ENCODE measurements at regions of chr21 and their contacts with region 1.

Region 1: GRCh38 chr21:38170280-38170679 is 86.5 kb upstream of the KCNJ15 start:
- DNase-seq: peak; percentile 66
- H3K4me3 ChIP-seq: no peak overlapping the region
- H3K27ac ChIP-seq: peak overlapping the region; percentile 84
- H3K4me1 ChIP-seq: peaks cover 36% of the 10 kb centered on the region
- H3K27me3 ChIP-seq: no peaks in the 10 kb centered on the region
- CTCF ChIP-seq: peak; percentile 67 to 68
- POLR2A ChIP-seq: no peak

Region 2: DNA sequence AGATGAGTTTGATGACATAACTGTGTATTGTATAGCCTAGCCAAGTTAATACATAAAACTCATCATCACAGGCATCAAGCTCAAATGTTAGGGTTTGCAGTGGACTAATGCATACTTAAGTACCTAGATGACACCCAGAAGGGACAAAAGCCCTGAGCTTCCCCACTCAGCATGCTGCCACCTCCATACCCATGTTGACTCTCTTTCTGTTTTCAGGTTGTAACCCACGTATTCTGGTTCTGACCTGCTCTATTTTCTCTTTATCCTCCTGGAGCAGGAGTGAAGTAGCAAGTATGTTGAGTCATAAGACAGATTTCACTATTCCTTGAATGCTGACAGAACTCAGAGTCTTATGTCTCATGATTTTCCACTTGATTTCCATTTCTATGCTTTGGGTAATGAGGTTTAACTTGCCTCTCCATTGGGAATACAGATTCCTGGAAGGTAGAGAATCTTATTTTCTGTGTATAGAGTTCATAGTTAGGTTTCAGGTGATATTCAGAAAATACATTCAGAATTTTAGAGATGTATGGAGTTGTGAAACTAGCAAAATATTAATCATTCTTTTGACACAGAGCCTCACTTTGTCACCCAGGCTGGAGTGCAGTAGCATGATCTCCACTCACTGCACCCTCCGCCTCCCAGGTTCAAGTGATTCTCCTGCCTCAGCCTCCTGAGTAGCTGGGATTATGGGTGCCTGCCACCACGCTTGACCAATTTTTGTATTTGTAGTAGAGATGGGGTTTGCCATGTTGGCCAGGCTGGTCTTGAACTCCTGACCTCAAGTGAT is 36.0 kb before region 1 on chr21:
- CTCF ChIA-PET with region 1: no interaction called
- POLR2A ChIA-PET with region 1: no interaction called
- dilution Hi-C with region 1: no loop called
- intact Hi-C with region 1: no loop called
- DNase-seq: no peak
- H3K4me3 ChIP-seq: no peak overlapping the region
- H3K27ac ChIP-seq: no peak overlapping the region
- H3K4me1 ChIP-seq: no peaks in the 10 kb centered on the region
- H3K27me3 ChIP-seq: peaks cover 7 to 10% of the 10 kb centered on the region in 2 experiments
- CTCF ChIP-seq: no peak
- POLR2A ChIP-seq: no peak

Region 3: DNA sequence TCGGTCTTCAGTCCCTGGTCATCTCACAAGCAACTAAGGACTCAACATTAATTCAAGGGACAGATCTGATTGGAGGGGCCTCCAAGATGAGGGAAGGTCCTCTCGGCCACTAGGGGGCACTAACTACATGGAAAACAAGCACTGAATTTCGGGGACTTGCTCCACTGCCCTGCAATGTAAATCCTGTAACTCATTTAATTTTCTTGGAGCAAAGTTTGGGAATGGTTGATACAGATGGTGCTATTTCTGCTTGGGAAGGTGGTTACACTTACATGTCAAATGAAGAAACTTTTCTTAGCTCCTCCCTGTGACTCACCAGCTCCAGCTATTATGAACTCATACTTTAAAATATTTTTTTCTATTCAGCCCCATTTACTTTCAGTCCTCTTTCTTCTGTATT is 10.9 kb before region 1 on chr21:
- CTCF ChIA-PET with region 1: interaction called, 71 read pairs
- POLR2A ChIA-PET with region 1: no interaction called
- dilution Hi-C with region 1: no loop called
- intact Hi-C with region 1: loop called (anchors 1 kb)
- DNase-seq: peak; percentile 81
- H3K4me3 ChIP-seq: no peak overlapping the region
- H3K27ac ChIP-seq: no peak overlapping the region
- H3K4me1 ChIP-seq: no peaks in the 10 kb centered on the region
- H3K27me3 ChIP-seq: peaks cover 20 to 29% of the 10 kb centered on the region in 2 experiments
- CTCF ChIP-seq: peak; percentile 84 to 93
- POLR2A ChIP-seq: no peak

Region 4: GRCh38 chr21:38196036-38196435 is 25.8 kb after region 1 on chr21:
- CTCF ChIA-PET with region 1: interaction called, 3 read pairs
- POLR2A ChIA-PET with region 1: no interaction called
- dilution Hi-C with region 1: no loop called
- intact Hi-C with region 1: loop called (anchors 2 kb)
- DNase-seq: peak; percentile 35
- H3K4me3 ChIP-seq: no peak overlapping the region
- H3K27ac ChIP-seq: no peak overlapping the region
- H3K4me1 ChIP-seq: peaks cover 4% of the 10 kb centered on the region
- H3K27me3 ChIP-seq: no peaks in the 10 kb centered on the region
- CTCF ChIP-seq: no peak
- POLR2A ChIP-seq: no peak

Region 5: DNA sequence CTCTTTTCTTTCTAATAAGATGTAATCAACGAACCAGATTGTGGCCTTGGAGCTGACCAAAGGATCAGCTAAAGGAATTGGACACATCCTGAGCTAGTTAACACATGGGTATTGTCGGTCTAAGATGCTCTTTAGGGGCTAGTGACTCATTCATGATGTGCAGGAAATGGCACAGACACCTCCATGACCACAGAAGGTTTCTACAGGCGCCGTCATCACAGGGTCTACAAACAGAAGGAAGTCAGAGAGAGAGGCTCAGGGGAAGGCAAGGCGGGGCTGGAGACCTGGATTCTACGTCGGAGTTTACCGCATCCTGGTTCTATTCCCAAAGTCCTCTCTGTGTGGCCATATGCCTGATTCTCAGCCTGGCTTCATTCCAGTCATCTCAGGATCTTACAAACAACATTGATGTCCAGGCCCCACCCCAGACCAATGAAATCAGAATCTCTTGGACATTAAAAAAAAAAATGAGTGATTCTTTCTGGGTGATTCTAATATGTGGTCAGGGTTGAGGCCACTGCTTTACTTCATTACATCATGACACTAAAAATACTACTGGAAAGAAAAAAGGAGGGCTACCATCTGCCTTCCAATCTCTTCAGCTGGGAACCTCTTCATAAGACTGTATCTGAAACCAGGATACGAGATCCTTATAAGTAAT is 74.7 kb after region 1 on chr21:
- CTCF ChIA-PET with region 1: interaction called, 7 read pairs
- POLR2A ChIA-PET with region 1: no interaction called
- dilution Hi-C with region 1: no loop called
- intact Hi-C with region 1: loop called (anchors 2 kb)
- DNase-seq: peak; percentile 33
- H3K4me3 ChIP-seq: no peak overlapping the region
- H3K27ac ChIP-seq: peak overlapping the region; percentile 7
- H3K4me1 ChIP-seq: peaks cover 22% of the 10 kb centered on the region
- H3K27me3 ChIP-seq: peaks cover 2 to 12% of the 10 kb centered on the region in 2 experiments
- CTCF ChIP-seq: no peak
- POLR2A ChIP-seq: no peak

Region 6: DNA sequence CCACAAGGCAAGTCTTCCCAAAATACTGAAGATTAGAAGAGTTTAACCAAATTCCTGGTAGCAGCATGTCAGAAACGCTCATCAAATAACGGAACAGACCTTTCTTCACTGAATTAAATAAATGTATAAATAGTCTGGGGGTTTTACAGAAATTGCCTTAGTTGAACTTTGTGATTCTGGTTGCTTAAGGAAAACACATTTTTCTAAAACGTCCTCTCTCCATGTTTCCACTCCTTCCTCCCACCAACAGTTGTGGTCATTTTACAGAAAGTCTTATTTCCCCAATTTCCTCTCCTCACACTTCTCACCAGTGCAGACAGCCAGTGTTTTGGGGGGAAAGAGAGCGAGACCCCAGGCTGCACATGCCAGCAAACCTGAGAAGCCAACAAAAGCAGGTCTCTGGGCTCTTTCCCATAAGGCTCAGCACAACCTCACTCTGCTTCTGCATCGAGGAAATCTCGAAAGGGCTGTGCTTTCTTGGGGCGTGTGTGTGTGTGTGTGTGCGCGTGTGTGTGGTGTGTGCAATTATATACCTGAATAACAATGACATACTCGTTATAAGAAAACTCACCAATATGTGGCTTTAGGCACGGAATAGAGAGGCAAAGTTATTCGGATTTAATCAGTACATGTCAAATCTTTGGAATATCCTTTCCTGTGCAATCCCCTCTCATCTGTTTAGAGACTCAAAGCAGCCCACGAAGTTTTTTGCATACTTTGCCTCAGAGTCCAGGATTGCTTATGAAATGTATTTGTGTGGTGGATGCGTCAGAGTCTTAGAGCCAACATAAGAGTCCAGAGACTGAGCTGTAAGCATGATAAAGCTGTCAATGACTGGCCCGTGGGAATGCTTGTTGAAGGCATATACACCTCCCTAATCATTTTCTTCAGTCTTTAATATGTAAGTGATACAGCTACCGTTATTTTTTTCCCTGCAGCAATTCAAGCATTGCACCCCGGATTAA is 88.5 kb after region 1 on chr21:
- CTCF ChIA-PET with region 1: no interaction called
- POLR2A ChIA-PET with region 1: no interaction called
- dilution Hi-C with region 1: no loop called
- intact Hi-C with region 1: no loop called
- DNase-seq: no peak
- H3K4me3 ChIP-seq: no peak overlapping the region
- H3K27ac ChIP-seq: no peak overlapping the region
- H3K4me1 ChIP-seq: no peaks in the 10 kb centered on the region
- H3K27me3 ChIP-seq: peaks cover 17 to 30% of the 10 kb centered on the region in 2 experiments
- CTCF ChIP-seq: no peak
- POLR2A ChIP-seq: no peak

Region 7: GRCh38 chr21:38333301-38334272 is 163.3 kb after region 1 on chr21:
- CTCF ChIA-PET with region 1: interaction called, 27 read pairs
- POLR2A ChIA-PET with region 1: no interaction called
- dilution Hi-C with region 1: no loop called
- intact Hi-C with region 1: no loop called
- DNase-seq: no peak
- H3K4me3 ChIP-seq: no peak overlapping the region
- H3K27ac ChIP-seq: no peak overlapping the region
- H3K4me1 ChIP-seq: no peaks in the 10 kb centered on the region
- H3K27me3 ChIP-seq: no peaks in the 10 kb centered on the region
- CTCF ChIP-seq: peak; percentile 10 to 17
- POLR2A ChIP-seq: no peak

Region 8: DNA sequence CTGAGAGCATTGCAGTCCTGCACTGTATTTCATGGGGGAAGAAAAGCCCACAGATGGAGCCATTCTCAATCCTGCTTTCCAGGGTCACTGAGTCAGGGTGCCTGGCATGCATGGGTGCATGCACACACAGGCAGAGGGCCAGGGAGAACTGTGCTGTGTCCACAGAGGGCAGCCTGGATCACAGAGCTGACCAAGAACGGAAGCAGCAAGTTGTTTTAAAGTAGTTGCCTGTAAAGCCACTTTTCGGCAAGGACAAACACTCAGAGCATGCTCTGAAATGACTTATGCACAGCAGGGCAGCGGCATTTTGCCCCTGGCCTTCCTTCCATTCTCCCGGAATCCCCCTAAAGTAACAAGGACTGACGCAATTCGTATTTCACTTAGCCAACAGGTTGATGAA is 324.4 kb after region 1 on chr21:
- CTCF ChIA-PET with region 1: no interaction called
- POLR2A ChIA-PET with region 1: no interaction called
- dilution Hi-C with region 1: no loop called
- intact Hi-C with region 1: loop called (anchors 5 kb)
- DNase-seq: peak; percentile 88
- H3K4me3 ChIP-seq: peak overlapping the region; percentile 84 to 100 (median 99)
- H3K27ac ChIP-seq: peak overlapping the region; percentile 100
- H3K4me1 ChIP-seq: peaks cover 63% of the 10 kb centered on the region
- H3K27me3 ChIP-seq: no peaks in the 10 kb centered on the region
- CTCF ChIP-seq: no peak
- POLR2A ChIP-seq: peak; percentile 86